ENCODE measurements at regions of chr9 and their contacts with region 1.

Region 1: DNA sequence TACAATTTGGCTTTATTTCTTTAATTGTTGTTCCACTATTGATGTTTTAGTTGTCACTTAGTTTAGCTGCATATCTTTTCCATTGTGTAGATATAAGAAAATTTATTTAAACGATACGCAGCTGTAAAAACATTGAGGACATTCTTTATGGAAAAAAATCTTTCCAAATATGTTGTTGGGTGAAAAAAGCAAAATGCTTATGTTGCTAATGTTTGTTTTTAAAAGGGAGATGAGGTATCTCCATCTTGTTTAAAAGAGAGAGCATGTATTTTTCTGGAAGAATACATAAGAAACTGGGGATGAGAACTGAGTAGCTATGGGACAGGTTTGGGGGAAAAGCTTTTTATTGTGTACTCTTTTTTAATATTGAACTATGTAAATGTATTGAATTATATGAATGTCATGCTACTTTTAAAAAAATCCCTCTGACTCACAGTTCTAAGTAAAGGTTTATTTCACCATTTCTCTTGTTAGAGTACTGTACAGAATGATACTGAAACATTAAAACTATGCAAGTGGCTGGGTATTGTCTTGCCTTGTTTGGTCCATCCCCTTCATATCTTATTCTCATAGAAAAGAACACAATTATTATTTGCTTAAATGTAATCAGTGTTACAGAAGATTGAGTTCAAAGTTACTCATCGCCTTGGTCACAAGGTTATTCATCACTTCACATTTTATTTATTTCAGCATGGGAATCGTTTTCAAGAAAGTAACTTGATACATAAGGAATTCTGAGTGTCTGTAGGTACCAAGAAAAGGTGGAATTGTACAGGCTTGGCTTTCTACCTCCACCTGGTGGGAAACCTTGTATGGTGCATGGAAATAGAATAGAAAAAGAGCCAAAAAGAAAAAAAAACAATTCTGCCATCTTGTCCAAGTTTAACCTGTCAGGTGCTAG is 85.8 kb downstream of the RIC1 start:
- DNase-seq: no peak
- H3K4me3 Mint-ChIP-seq: no peak overlapping the region
- H3K27ac Mint-ChIP-seq: no peak overlapping the region
- H3K4me1 Mint-ChIP-seq: peaks cover 8% of the 10 kb centered on the region
- H3K27me3 Mint-ChIP-seq: no peaks in the 10 kb centered on the region

Region 2: GRCh38 chr9:5644501-5644900 is 70.2 kb before region 1 on chr9:
- CTCF ChIA-PET with region 1: no interaction called
- POLR2A ChIA-PET with region 1: no interaction called
- intact Hi-C with region 1: loop called (anchors 5 kb)
- DNase-seq: no peak
- H3K4me3 Mint-ChIP-seq: no peak overlapping the region
- H3K27ac Mint-ChIP-seq: peak overlapping the region; percentile 10
- H3K4me1 Mint-ChIP-seq: peaks cover 36% of the 10 kb centered on the region
- H3K27me3 Mint-ChIP-seq: no peaks in the 10 kb centered on the region

Measured in activated CD4-positive, alpha-beta memory T cell treated with anti-CD3 and anti-CD28 coated beads for 36 hours (primary cell).